Gastrocnemius medialis (tissue), 4 donors: ENCODE measurements at regions of chr4 and their contacts with region 1.

Region 1: GRCh38 chr4:118835571-118836300 is at the start of gene SEC24D:
- DNase-seq: peak; percentile 71 to 77
- ATAC-seq: peak; percentile 91 to 92
- H3K4me3 ChIP-seq: peak within 1 kb of the TSS; percentile 71 to 99 (median 92)
- H3K27ac ChIP-seq: peak within 1 kb of the TSS; percentile 81 to 97 (median 94)
- H3K4me1 ChIP-seq: peaks cover 14 to 16% of the 10 kb centered on the region in 2 donors
- H3K27me3 ChIP-seq: no peaks in the 10 kb centered on the region
- CTCF ChIP-seq: peak in 2 of 5 experiments; percentile 30 to 42
- POLR2A ChIP-seq: peak; percentile 75 to 79
- total RNA-seq, gene SEC24D: 8.9 to 16.2 (median 10.4) TPM

Region 2: GRCh38 chr4:118586357-118586790 is 249.4 kb before region 1 on chr4:
- in situ Hi-C with region 1: loop called in 1 of 4 experiments (anchors 25 kb)
- intact Hi-C with region 1: no loop called
- DNase-seq: peak in 1 of 2 donors; percentile 16
- ATAC-seq: peak in 1 of 2 donors; percentile 34
- H3K4me3 ChIP-seq: peak overlapping the region in 1 of 4 donors; percentile 17
- H3K27ac ChIP-seq: no peak overlapping the region
- H3K4me1 ChIP-seq: peaks cover 0 to 9% of the 10 kb centered on the region in 2 donors
- H3K27me3 ChIP-seq: no peaks in the 10 kb centered on the region
- CTCF ChIP-seq: no peak
- POLR2A ChIP-seq: no peak

Region 3: DNA sequence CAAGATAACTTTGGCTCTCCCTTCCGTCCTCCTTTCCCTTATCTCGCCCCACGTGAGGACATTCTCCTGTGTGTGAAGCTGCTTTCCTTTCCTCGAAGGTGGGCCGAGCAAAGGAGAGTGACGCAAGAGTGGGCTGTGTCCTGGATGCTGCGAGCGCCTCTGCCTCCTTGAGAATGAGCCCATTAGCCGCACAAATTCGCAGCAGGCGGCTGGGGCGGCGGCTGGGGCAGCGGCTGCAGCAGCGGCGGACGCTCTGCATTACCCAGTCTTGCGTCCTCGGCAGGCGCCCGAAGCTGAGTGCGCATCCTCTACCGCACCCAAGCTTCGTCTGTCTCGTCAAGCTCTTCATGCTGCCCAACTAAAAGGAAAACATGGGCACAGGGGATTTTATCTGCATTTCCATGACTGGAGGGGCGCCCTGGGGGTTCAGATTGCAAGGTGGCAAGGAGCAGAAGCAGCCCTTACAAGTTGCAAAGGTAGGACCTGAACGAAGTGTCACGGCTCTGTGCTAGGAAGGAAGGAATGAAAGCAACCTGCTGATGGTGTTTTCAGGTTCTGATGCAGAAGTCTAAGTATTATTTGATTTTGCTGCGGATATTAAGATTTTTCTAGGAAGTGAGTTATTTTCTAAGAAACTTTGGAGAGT is 53.1 kb after region 1 on chr4 and contains the start of gene SYNPO2:
- in situ Hi-C with region 1: no loop called
- intact Hi-C with region 1: loop called (anchors 5 kb)
- DNase-seq: peak; percentile 48 to 73
- ATAC-seq: peak; percentile 67 to 69
- H3K4me3 ChIP-seq: peak within 1 kb of the TSS; percentile 51 to 78 (median 66)
- H3K27ac ChIP-seq: peak within 1 kb of the TSS; percentile 72 to 88 (median 85)
- H3K4me1 ChIP-seq: peaks cover 28 to 36% of the 10 kb centered on the region in 2 donors
- H3K27me3 ChIP-seq: no peaks in the 10 kb centered on the region
- CTCF ChIP-seq: no peak
- POLR2A ChIP-seq: peak; percentile 10 to 54
- total RNA-seq, gene SYNPO2: 998 to 4,186 (median 1,764) TPM

Region 4: GRCh38 chr4:118968005-118968404 is 132.3 kb after region 1 on chr4:
- in situ Hi-C with region 1: no loop called
- intact Hi-C with region 1: loop called (anchors 1 kb)
- DNase-seq: peak; percentile 87 to 91
- ATAC-seq: peak; percentile 82 to 83
- H3K4me3 ChIP-seq: peak overlapping the region in 3 of 4 donors; percentile 24 to 36 (median 33)
- H3K27ac ChIP-seq: peak overlapping the region; percentile 87 to 99 (median 92)
- H3K4me1 ChIP-seq: peaks cover 55 to 63% of the 10 kb centered on the region in 2 donors
- H3K27me3 ChIP-seq: no peaks in the 10 kb centered on the region
- CTCF ChIP-seq: no peak
- POLR2A ChIP-seq: no peak